CD8-positive, alpha-beta T cell (primary cell): ENCODE measurements at regions of chr11 and their contacts with region 1.

Region 1: DNA sequence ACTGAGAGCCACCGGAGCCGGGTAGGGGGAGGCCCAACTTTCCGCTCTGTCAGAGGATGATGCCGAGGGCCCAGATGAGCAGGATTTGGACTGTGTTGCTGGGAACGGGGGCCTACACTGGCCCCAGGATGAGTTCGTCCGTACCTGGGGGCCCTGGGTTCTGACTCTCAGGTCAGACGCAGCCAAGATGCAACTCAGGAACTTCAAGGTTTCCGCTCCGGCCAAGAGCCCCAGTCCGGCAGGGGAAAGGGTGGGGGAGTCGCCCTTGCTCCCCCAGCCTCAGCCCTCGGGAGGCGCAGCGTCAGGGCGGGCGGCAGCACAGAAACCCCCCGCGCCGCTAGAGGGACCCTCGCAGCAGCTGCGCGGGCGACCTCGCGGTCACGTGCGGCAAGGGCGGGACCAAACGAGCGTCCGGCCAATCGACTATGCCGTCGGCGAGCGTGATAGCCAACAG is 241 bp upstream of the ARL2 start:
- DNase-seq: peak; percentile 74 to 95 (median 89)
- ATAC-seq: peak; percentile 91
- H3K4me3 ChIP-seq: peak overlapping the region; percentile 73 to 94
- H3K4me3 Mint-ChIP-seq: peak overlapping the region; percentile 88
- H3K27ac ChIP-seq: peak overlapping the region; percentile 87 to 100
- H3K27ac Mint-ChIP-seq: peak overlapping the region; percentile 96
- H3K4me1 ChIP-seq: peaks cover 24% of the 10 kb centered on the region
- H3K4me1 Mint-ChIP-seq: peaks cover 24% of the 10 kb centered on the region
- H3K27me3 ChIP-seq: no peaks in the 10 kb centered on the region
- H3K27me3 Mint-ChIP-seq: no peaks in the 10 kb centered on the region
- CTCF ChIP-seq: peak; percentile 58

Region 2: GRCh38 chr11:64916775-64917662 is 96.7 kb before region 1 on chr11 and contains the start of gene ATG2A:
- CTCF ChIA-PET with region 1: interaction called, 3 read pairs
- POLR2A ChIA-PET with region 1: no interaction called
- intact Hi-C with region 1: loop called in 1 of 2 experiments (anchors 2 kb)
- DNase-seq: peak; percentile 98 to 100 (median 99)
- ATAC-seq: peak; percentile 96
- H3K4me3 ChIP-seq: peak within 1 kb of the TSS; percentile 76 to 79
- H3K4me3 Mint-ChIP-seq: peak within 1 kb of the TSS; percentile 94
- H3K27ac ChIP-seq: peak within 1 kb of the TSS; percentile 77 to 93
- H3K27ac Mint-ChIP-seq: peak within 1 kb of the TSS; percentile 94
- H3K4me1 ChIP-seq: peaks cover 26% of the 10 kb centered on the region
- H3K4me1 Mint-ChIP-seq: peaks cover 22% of the 10 kb centered on the region
- H3K27me3 ChIP-seq: no peaks in the 10 kb centered on the region
- H3K27me3 Mint-ChIP-seq: no peaks in the 10 kb centered on the region
- CTCF ChIP-seq: no peak
- total RNA-seq, gene ATG2A: 285 to 311 TPM

Region 3: GRCh38 chr11:65027213-65028067 is 13.7 kb after region 1 on chr11 and contains the start of gene SNX15:
- CTCF ChIA-PET with region 1: interaction called, 58 read pairs
- POLR2A ChIA-PET with region 1: interaction called, 9 read pairs
- intact Hi-C with region 1: loop called (anchors 1 kb)
- DNase-seq: peak; percentile 77 to 96 (median 90)
- ATAC-seq: peak; percentile 96
- H3K4me3 ChIP-seq: peak within 1 kb of the TSS; percentile 34 to 54
- H3K4me3 Mint-ChIP-seq: peak within 1 kb of the TSS; percentile 69
- H3K27ac ChIP-seq: peak within 1 kb of the TSS; percentile 41 to 71
- H3K27ac Mint-ChIP-seq: peak within 1 kb of the TSS; percentile 80
- H3K4me1 ChIP-seq: peaks cover 19% of the 10 kb centered on the region
- H3K4me1 Mint-ChIP-seq: peaks cover 18% of the 10 kb centered on the region
- H3K27me3 ChIP-seq: no peaks in the 10 kb centered on the region
- H3K27me3 Mint-ChIP-seq: no peaks in the 10 kb centered on the region
- CTCF ChIP-seq: peak; percentile 80
- total RNA-seq, gene SNX15: 10.4 to 14.0 TPM

Region 4: DNA sequence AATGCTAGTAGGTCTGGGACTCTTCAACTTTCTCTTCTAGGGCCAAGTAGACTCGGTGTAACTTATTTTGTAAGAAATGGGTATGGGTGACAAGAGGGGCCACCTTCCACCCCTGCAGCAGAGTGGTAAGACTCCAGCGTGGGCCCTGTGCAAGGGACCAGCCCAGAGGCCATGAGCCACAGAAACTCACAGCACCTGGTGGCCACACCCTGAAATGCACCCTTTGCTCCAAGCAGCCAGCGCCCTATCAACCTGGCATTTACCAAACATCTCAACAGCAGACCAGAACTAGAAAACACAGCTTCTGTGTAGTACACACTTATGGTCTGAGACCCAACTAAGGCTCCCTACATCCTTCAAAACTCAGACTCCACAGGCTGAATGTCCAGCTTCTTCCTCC is 64.4 kb after region 1 on chr11:
- CTCF ChIA-PET with region 1: interaction called, 14 read pairs
- POLR2A ChIA-PET with region 1: no interaction called
- intact Hi-C with region 1: loop called (anchors 1 kb)
- DNase-seq: peak; percentile 50 to 80 (median 74)
- ATAC-seq: peak; percentile 100
- H3K4me3 ChIP-seq: no peak overlapping the region
- H3K4me3 Mint-ChIP-seq: no peak overlapping the region
- H3K27ac ChIP-seq: no peak overlapping the region
- H3K27ac Mint-ChIP-seq: no peak overlapping the region
- H3K4me1 ChIP-seq: peaks cover 6% of the 10 kb centered on the region
- H3K4me1 Mint-ChIP-seq: peaks cover 10% of the 10 kb centered on the region
- H3K27me3 ChIP-seq: no peaks in the 10 kb centered on the region
- H3K27me3 Mint-ChIP-seq: no peaks in the 10 kb centered on the region
- CTCF ChIP-seq: peak; percentile 70

Region 5: DNA sequence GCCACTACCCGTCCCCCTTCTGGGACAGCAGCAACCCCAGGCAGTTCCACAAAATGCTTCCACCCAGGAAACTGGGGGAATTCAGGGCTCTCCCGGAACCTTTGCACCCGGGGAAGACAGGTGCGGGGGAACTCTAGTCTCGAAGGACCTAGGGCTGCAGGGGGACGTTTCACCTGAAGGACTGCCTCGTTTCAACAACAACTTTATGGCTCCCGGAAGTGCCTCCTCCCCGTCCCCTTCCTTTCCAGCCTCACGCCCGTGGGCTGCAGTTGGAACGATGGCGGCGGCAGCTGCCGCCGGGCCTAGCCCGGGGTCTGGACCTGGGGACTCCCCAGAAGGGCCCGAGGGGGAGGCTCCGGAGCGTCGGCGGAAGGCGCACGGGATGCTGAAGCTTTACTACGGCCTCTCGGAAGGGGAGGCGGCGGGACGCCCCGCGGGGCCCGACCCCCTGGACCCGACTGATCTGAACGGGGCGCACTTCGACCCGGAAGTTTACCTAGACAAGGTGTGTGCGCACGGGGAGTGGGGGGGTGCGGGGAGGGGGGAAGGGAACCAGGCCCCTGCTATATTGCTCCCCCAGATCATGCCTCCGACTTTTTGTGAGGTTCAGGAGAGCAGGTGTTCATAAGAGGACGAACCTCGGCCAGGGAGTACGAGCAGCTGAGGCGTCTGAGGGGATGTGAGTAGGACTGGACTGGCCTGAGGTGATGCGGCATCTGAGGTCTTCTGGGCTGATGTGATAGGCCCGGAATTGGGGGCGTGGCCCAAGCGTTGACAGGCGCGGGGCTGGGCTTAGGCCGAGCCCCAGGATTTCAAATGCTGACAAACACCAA is 82.5 kb after region 1 on chr11 and contains the start of gene VPS51:
- CTCF ChIA-PET with region 1: interaction called, 11 read pairs
- POLR2A ChIA-PET with region 1: interaction called, 6 read pairs
- intact Hi-C with region 1: loop called (anchors 1 kb)
- DNase-seq: peak; percentile 70 to 95 (median 85)
- ATAC-seq: peak; percentile 84
- H3K4me3 ChIP-seq: peak within 1 kb of the TSS; percentile 80 to 81
- H3K4me3 Mint-ChIP-seq: peak within 1 kb of the TSS; percentile 95
- H3K27ac ChIP-seq: peak within 1 kb of the TSS; percentile 82 to 89
- H3K27ac Mint-ChIP-seq: peak within 1 kb of the TSS; percentile 99
- H3K4me1 ChIP-seq: peaks cover 12% of the 10 kb centered on the region
- H3K4me1 Mint-ChIP-seq: peaks cover 24% of the 10 kb centered on the region
- H3K27me3 ChIP-seq: no peaks in the 10 kb centered on the region
- H3K27me3 Mint-ChIP-seq: no peaks in the 10 kb centered on the region
- CTCF ChIP-seq: no peak
- total RNA-seq, gene VPS51: 221 to 263 TPM

Region 6: DNA sequence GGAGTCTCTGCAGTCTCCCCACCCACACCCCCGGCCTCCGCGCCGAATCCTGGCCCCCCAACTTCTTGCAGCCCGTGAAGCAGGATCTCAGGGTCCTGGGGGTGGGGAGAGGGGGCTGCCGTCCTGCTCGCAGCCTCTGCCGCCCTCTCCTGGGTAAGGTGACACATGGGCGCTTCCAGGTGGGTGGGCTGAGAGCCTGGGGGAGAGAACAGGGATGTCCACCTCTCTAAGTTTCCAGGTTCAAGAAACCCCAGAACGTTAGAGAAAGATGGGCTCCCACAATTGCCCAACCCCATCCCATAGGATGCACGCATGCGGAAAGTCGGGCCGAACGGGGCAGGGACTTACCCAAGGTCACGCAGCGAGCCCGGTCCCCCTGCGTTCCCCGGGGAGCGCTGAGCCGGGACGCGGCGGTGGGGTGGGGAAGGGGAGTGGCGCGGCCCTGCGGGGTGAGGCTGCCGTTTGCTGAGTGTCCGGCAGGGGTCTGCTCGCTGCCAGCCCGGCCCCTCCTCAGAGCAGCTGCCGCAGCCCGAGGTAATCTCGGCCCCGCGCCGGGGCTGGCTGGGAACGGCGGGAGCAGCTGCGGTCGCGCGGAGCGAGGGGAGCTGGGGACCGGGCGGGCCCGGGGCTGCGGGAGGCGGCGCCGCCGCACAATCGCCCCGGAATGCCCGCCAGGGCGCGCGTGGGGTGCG is 167.3 kb after region 1 on chr11:
- CTCF ChIA-PET with region 1: interaction called, 3 read pairs
- POLR2A ChIA-PET with region 1: no interaction called
- intact Hi-C with region 1: loop called (anchors 1 kb)
- DNase-seq: peak; percentile 17 to 73 (median 53)
- ATAC-seq: peak; percentile 68
- H3K4me3 ChIP-seq: peak overlapping the region; percentile 85 to 95
- H3K4me3 Mint-ChIP-seq: peak overlapping the region; percentile 91
- H3K27ac ChIP-seq: peak overlapping the region in 1 of 2 experiments; percentile 23
- H3K27ac Mint-ChIP-seq: peak overlapping the region; percentile 80
- H3K4me1 ChIP-seq: peaks cover 24% of the 10 kb centered on the region
- H3K4me1 Mint-ChIP-seq: peaks cover 28% of the 10 kb centered on the region
- H3K27me3 ChIP-seq: no peaks in the 10 kb centered on the region
- H3K27me3 Mint-ChIP-seq: no peaks in the 10 kb centered on the region
- CTCF ChIP-seq: peak; percentile 57

Region 7: DNA sequence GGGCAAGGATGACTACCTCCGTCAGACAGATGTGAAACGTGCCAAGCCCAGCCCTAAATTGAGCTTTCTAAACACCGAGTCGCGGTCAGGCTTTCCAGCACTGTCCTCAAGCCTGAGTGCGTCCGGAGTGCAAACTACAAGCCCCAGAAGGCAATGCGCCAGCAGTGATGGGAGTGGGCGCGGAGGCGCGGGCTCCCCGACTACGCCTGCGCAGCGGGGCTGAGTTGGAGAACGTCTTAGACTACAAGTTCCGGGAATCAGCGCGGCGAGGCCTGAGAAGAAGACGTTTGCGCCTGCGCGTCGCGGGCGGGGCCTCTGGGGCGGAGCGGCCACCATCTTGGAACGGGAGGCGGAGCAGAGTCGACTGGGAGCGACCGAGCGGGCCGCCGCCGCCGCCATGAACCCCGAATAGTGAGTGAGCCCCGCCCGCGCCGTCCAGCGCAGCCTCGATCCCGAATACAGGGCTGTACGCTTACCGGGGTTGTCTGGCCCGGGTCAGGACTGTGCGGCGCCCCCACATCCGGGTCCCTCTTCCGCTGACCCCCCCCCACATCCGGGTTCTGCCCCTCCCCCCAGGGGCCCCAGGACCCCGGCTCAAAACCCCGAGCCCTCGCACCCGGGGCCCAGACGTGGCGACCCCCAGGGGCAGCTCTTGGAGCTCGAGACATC is 1254.7 kb after region 1 on chr11 and contains the start of gene RAB1B:
- CTCF ChIA-PET with region 1: no interaction called
- POLR2A ChIA-PET with region 1: no interaction called
- intact Hi-C with region 1: loop called in 1 of 2 experiments (anchors 5 kb)
- DNase-seq: peak; percentile 99 to 100 (median 100)
- ATAC-seq: peak; percentile 75
- H3K4me3 ChIP-seq: peak within 1 kb of the TSS; percentile 89 to 97
- H3K4me3 Mint-ChIP-seq: peak within 1 kb of the TSS; percentile 97
- H3K27ac ChIP-seq: peak within 1 kb of the TSS; percentile 83 to 91
- H3K27ac Mint-ChIP-seq: peak within 1 kb of the TSS; percentile 97
- H3K4me1 ChIP-seq: peaks cover 43% of the 10 kb centered on the region
- H3K4me1 Mint-ChIP-seq: peaks cover 50% of the 10 kb centered on the region
- H3K27me3 ChIP-seq: no peaks in the 10 kb centered on the region
- H3K27me3 Mint-ChIP-seq: no peaks in the 10 kb centered on the region
- CTCF ChIP-seq: no peak
- total RNA-seq, gene RAB1B: 34.4 to 36.3 TPM